ENCODE measurements at regions of chr1 and their contacts with region 1.

Region 1: DNA sequence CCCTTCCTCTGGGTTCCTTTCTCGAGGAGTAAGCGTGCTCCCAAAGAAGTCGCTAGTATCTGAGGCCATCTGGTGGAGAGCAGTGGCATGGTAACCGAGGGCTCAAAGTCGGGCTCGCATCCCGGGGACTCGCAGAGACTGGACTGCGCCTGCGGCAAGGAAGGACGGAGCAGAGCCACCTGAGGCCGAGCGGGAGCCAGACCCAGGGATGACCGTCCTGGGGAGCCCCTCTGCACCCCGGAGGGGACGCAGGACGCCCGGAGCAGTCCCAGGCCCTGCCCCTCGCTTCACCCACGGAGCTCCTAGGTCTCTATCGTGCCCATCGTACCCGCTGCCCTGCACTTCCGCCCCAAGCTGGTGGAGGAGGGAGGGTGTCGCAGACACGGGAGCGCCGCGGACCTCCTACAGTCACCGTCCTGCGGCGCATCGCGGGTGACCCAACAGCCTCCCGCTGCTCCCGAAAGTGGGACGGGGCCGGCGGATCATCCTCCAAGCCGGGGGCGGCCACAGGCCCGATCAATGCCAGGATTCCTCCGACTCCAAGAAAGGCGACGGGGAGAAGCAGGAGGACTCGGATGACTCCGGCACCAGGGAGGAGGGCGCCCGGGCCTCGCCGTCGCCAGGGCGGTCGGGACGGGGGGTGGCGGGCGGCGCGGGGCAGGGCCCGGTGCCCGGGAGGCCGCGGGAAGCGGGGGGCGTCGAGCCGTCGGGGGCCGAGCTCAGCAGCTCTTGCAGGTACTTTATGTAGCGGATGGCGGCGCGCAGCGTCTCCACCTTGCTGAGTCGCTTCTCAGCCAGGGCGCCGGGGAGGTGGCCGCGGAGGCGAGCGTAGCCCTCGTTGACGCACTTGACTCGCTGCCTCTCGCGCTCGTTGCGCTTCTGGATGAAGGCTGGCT is 2.3 kb upstream of the CACNA1S start:
- DNase-seq: peak; percentile 97
- H3K4me3 ChIP-seq: peak overlapping the region; percentile 64
- H3K27ac ChIP-seq: no peak overlapping the region
- H3K4me1 ChIP-seq: peaks cover 8% of the 10 kb centered on the region
- H3K27me3 ChIP-seq: no peaks in the 10 kb centered on the region
- CTCF ChIP-seq: peak; percentile 91

Region 2: GRCh38 chr1:200558866-200559459 is 555.5 kb before region 1 on chr1:
- CTCF ChIA-PET with region 1: interaction called, 5 read pairs
- POLR2A ChIA-PET with region 1: no interaction called
- intact Hi-C with region 1: loop called (anchors 10 kb)
- DNase-seq: peak; percentile 53
- H3K4me3 ChIP-seq: no peak overlapping the region
- H3K27ac ChIP-seq: no peak overlapping the region
- H3K4me1 ChIP-seq: no peaks in the 10 kb centered on the region
- H3K27me3 ChIP-seq: no peaks in the 10 kb centered on the region
- CTCF ChIP-seq: peak; percentile 73

Region 3: GRCh38 chr1:200979574-200980451 is 134.7 kb before region 1 on chr1:
- CTCF ChIA-PET with region 1: interaction called, 20 read pairs
- POLR2A ChIA-PET with region 1: no interaction called
- intact Hi-C with region 1: no loop called
- DNase-seq: peak; percentile 69
- H3K4me3 ChIP-seq: no peak overlapping the region
- H3K27ac ChIP-seq: no peak overlapping the region
- H3K4me1 ChIP-seq: no peaks in the 10 kb centered on the region
- H3K27me3 ChIP-seq: no peaks in the 10 kb centered on the region
- CTCF ChIP-seq: peak; percentile 80

Region 4: DNA sequence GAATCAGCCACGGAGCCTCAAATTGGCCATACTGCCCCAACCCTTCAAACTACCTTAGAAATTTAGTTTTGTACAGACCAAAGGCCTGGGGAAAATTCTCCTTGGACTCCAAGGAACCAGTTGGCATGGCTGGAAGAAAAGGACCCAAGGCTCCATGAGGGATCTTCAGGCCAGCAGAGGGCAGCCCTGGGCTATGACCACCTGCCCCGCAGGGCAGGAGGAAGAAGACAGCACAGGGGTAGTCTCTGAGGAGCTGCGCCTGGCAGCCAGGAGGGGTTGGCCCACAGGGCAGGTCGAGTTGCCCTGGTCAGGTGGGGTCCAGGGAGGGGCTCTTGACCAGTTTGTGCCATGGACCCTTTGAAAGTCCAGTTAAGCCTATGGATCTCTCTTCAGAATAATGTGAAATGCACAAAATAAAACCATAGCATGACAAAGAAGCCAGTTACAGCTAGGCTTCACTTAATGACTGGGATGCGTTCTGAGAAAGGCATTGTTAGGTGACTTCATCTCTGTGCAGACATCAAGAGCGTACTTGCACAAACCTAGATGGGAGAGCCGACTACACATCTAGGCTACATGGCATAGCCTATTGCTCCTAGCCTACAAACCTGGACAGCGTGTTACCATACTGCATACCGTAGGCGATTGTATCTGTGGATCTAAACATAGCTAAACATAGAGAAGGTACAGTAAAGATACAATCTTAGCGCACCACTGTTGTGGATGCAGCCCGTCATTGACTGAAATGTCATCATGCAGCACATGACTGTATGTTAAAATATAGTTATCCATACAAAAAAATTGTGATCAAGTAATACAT is 28.4 kb before region 1 on chr1:
- CTCF ChIA-PET with region 1: interaction called, 4 read pairs
- POLR2A ChIA-PET with region 1: no interaction called
- intact Hi-C with region 1: loop called (anchors 1 kb)
- DNase-seq: peak; percentile 48
- H3K4me3 ChIP-seq: no peak overlapping the region
- H3K27ac ChIP-seq: no peak overlapping the region
- H3K4me1 ChIP-seq: no peaks in the 10 kb centered on the region
- H3K27me3 ChIP-seq: no peaks in the 10 kb centered on the region
- CTCF ChIP-seq: peak; percentile 55

Region 5: DNA sequence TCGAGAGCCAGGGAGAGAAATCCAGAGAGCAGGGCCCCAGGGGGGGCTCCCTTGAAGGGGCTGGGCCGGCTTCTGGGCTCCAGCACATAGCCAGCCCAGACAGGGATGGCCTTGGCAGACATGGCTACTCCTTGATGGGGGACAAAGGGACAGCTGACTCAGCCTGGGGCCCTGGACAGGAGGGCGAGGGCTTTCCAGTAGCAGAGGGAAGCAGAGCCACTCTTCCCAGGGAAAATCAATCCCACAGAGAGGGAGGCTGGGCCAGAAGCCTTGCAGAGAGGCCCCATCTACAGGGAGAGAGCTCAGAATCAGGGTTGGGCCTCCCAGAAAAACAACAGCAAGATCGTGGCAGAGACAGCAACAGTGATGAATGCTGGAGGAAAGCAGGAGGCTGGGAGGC is 91.7 kb after region 1 on chr1:
- CTCF ChIA-PET with region 1: no interaction called
- POLR2A ChIA-PET with region 1: no interaction called
- intact Hi-C with region 1: no loop called
- DNase-seq: no peak
- H3K4me3 ChIP-seq: no peak overlapping the region
- H3K27ac ChIP-seq: no peak overlapping the region
- H3K4me1 ChIP-seq: no peaks in the 10 kb centered on the region
- H3K27me3 ChIP-seq: no peaks in the 10 kb centered on the region
- CTCF ChIP-seq: no peak

Region 6: GRCh38 chr1:201309426-201309825 is 194.9 kb after region 1 on chr1:
- CTCF ChIA-PET with region 1: no interaction called
- POLR2A ChIA-PET with region 1: no interaction called
- intact Hi-C with region 1: no loop called
- DNase-seq: peak; percentile 85
- H3K4me3 ChIP-seq: no peak overlapping the region
- H3K27ac ChIP-seq: peak overlapping the region; percentile 94
- H3K4me1 ChIP-seq: peaks cover 90% of the 10 kb centered on the region
- H3K27me3 ChIP-seq: no peaks in the 10 kb centered on the region
- CTCF ChIP-seq: peak; percentile 57